K562 (cell line): ENCODE measurements at regions of chr12 and their contacts with region 1.

Region 1: DNA sequence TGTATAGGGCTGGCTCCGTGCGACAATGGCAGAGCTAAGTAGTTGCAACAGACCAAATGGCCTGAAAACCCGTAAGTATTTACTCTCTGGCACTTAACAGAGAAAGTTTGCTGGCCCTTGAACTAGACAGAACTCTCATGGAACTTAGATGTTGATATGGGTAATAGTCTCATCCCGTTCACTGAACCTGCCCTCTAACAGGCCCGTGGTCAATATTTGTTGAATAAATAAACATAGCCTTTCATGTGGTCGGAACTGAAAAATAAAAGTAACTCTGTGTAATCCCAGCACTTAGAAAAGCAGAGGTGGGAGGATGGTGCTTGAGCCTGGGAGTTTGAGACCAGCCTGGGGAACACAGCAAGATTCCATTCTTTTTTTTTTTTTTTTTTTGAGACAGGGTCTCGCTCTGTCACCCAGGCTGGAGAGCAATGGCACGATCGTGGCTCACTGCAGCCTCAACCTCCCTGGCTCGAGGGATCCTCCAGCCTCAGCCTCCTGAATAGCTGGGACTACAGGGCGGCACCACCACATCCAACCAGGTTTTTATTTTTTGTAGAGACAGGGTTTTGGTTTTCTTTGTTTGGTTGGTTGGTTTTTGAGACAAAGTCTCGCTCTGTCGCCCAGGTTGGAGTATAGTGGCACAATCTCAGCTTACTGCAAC is 29.7 kb downstream of the KDM2B start:
- DNase-seq: no peak
- ATAC-seq: no peak
- H3K4me3 ChIP-seq: no peak overlapping the region
- H3K27ac ChIP-seq: no peak overlapping the region
- H3K4me1 ChIP-seq: peaks cover 0 to 7% of the 10 kb centered on the region in 2 experiments; a peak in 1 of 5 replicates
- H3K27me3 ChIP-seq: no peaks in the 10 kb centered on the region
- CTCF ChIP-seq: no peak
- EP300 ChIP-seq: no peak
- POLR2A ChIP-seq: no peak
- RAD21 ChIP-seq: no peak

Region 2: GRCh38 chr12:121227300-121227699 is 323.8 kb before region 1 on chr12:
- CTCF ChIA-PET with region 1: no interaction called
- POLR2A ChIA-PET with region 1: no interaction called
- in situ Hi-C with region 1: no loop called
- intact Hi-C with region 1: no loop called
- DNase-seq: no peak
- ATAC-seq: no peak
- H3K4me3 ChIP-seq: no peak overlapping the region
- H3K27ac ChIP-seq: no peak overlapping the region
- H3K4me1 ChIP-seq: peaks cover 4 to 18% of the 10 kb centered on the region in 2 experiments; a peak in 4 of 5 replicates
- H3K27me3 ChIP-seq: no peaks in the 10 kb centered on the region
- CTCF ChIP-seq: no peak
- EP300 ChIP-seq: no peak
- POLR2A ChIP-seq: no peak
- RAD21 ChIP-seq: no peak

Region 3: GRCh38 chr12:121499929-121500793 is 50.9 kb before region 1 on chr12:
- CTCF ChIA-PET with region 1: interaction called, 3 read pairs
- POLR2A ChIA-PET with region 1: no interaction called
- in situ Hi-C with region 1: no loop called
- intact Hi-C with region 1: loop called (anchors 5 kb)
- DNase-seq: peak; percentile 82 to 92 (median 90)
- ATAC-seq: peak; percentile 96
- H3K4me3 ChIP-seq: no peak overlapping the region
- H3K27ac ChIP-seq: no peak overlapping the region
- H3K4me1 ChIP-seq: no peaks in the 10 kb centered on the region; a peak in 1 of 5 replicates
- H3K27me3 ChIP-seq: no peaks in the 10 kb centered on the region
- CTCF ChIP-seq: peak; percentile 90 to 93 (median 92)
- EP300 ChIP-seq: no peak
- POLR2A ChIP-seq: no peak
- RAD21 ChIP-seq: peak; percentile 58 to 81

Region 4: GRCh38 chr12:121668750-121669520 is 117.8 kb after region 1 on chr12:
- CTCF ChIA-PET with region 1: interaction called, 8 read pairs
- POLR2A ChIA-PET with region 1: interaction called, 8 read pairs
- in situ Hi-C with region 1: loop called (anchors 5 kb)
- intact Hi-C with region 1: loop called (anchors 2 kb)
- DNase-seq: peak; percentile 40 to 57 (median 44)
- ATAC-seq: no peak
- H3K4me3 ChIP-seq: no peak overlapping the region
- H3K27ac ChIP-seq: no peak overlapping the region
- H3K4me1 ChIP-seq: peaks cover 2 to 36% of the 10 kb centered on the region in 2 experiments; a peak in 3 of 5 replicates
- H3K27me3 ChIP-seq: no peaks in the 10 kb centered on the region
- CTCF ChIP-seq: peak; percentile 60 to 76 (median 66)
- EP300 ChIP-seq: no peak
- POLR2A ChIP-seq: no peak
- RAD21 ChIP-seq: peak; percentile 45 to 62

Region 5: DNA sequence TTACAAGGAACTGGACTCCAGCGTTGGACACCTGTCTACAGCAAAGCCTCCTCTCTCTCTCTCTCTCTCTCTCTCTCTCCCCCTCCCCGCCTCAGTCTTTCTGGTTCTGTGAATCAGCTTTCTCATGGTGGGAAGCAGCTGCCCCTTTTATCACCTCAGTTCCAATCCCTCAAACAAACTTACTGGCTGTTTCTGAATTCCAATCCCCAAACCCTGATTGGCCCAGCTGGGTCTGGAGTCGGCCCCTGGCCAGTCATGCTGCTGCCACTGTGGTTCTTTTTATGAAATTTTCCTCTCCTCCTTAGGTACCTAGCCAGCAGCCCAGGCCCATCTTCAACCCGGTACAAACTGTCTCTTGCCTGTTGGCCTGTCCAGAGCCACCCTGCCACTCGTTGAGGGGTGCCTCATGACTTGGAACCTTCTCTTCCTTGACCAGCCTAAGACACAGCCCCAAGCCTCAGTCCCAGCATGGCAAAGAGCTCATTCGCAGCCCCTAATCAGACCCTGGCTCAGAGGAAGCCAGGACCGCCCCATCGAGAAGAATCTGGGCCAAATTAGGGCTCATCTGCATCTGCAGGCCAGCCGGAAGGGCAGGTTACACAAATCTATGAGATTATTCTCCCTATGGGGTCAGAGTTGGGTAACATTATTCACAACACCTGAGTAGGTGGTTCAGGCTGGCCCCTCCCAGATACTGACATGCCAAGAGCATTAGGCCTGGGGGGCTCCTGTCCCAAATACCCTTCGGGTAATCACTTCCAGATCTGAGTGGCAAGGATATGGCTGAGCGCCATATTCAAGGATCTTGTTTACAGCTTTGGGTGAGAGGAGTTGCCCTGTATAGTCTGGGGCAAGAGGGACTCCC is 127.8 kb after region 1 on chr12:
- CTCF ChIA-PET with region 1: interaction called, 22 read pairs
- POLR2A ChIA-PET with region 1: no interaction called
- in situ Hi-C with region 1: loop called (anchors 5 kb)
- intact Hi-C with region 1: loop called (anchors 1 kb)
- DNase-seq: peak in 3 of 4 experiments; percentile 27 to 36 (median 33)
- ATAC-seq: peak; percentile 46
- H3K4me3 ChIP-seq: no peak overlapping the region
- H3K27ac ChIP-seq: no peak overlapping the region
- H3K4me1 ChIP-seq: peaks cover 2 to 4% of the 10 kb centered on the region in 2 experiments; a peak in 2 of 5 replicates
- H3K27me3 ChIP-seq: no peaks in the 10 kb centered on the region
- CTCF ChIP-seq: no peak
- EP300 ChIP-seq: no peak
- POLR2A ChIP-seq: no peak
- RAD21 ChIP-seq: no peak

Region 6: DNA sequence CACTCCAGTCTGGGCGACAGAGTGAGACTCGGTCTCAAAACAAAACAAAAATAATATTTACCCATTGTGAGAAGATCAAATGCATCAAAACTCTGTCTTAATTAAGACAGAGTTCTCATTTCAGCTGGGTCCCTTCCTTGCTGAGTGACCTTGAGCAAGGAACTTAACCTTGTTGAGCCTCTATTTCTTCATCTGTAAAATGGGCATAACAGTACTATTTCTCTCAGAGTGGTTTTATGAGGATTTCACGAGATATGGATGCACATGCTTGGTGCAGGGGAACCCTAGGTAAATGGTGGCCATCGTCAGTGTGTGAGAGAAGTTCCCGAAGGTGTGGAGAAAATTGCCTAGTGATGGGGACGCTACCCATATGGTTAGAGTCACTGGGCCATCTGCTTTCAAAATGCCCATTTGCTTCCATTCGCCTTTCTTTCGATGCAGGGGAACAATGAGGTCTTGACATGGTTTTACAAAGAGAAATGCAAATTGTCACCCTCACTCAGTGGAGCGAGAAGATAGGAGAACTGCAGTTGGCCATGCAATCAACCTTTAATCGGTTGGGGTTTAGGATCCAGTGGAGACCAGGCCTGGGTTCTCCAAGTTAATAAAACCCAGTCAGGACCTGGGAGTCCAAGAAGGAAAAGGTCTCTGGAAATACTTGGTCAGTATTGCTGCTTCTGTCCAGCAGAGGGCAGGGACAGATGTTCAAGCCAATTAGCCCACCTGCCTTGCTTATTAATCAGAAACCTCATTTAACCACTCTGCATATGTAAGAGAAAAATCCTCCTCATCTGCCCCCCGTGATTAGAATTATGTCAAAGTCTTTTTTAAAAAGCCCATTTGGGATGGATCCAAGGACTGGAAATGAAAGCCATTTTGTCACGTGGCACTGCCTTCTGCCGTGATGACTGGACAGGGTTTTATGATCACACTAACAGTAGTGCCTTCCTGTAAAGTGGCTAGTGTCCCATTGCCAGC is 404.4 kb after region 1 on chr12:
- CTCF ChIA-PET with region 1: no interaction called
- POLR2A ChIA-PET with region 1: no interaction called
- in situ Hi-C with region 1: no loop called
- intact Hi-C with region 1: no loop called
- DNase-seq: peak in 3 of 4 experiments; percentile 30 to 41 (median 39)
- ATAC-seq: peak; percentile 78
- H3K4me3 ChIP-seq: no peak overlapping the region
- H3K27ac ChIP-seq: no peak overlapping the region
- H3K4me1 ChIP-seq: no peaks in the 10 kb centered on the region
- H3K27me3 ChIP-seq: no peaks in the 10 kb centered on the region
- CTCF ChIP-seq: peak; percentile 45 to 57 (median 56)
- EP300 ChIP-seq: no peak
- POLR2A ChIP-seq: no peak
- RAD21 ChIP-seq: peak in 1 of 2 experiments; percentile 45; a peak in 2 of 4 replicates